ENCODE measurements at regions of chr5 and their contacts with region 1.

Region 1: DNA sequence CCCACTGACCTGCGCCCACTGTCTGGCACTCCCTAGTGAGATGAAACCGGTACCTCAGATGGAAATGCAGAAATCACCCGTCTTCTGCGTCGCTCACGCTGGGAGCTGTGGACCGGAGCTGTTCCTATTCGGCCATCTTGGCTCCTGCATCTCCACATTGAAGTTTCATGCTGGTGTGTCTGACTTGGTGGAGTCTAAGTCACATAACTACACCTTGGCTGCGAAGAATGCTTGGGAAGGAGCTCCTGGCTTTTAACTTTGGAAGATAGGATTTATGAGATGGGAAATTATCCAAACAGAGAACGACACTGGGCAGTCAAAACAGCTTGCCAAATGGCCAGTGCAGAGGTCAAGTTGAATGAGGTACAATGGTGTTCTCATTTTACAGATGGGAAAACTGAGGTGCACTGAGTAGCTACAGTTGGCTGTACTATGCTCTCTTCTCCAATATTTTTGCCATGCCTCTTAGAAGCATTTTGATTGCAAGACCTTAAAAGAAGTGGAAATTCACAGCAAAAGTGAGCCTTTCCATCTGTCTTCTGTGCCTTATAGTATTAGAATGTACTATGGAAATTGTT is 36.7 kb downstream of the CCDC192 start:
- DNase-seq: no peak
- H3K4me3 ChIP-seq: no peak overlapping the region
- H3K27ac ChIP-seq: no peak overlapping the region
- H3K4me1 ChIP-seq: no peaks in the 10 kb centered on the region
- H3K27me3 ChIP-seq: no peaks in the 10 kb centered on the region
- CTCF ChIP-seq: no peak
- POLR2A ChIP-seq: no peak

Region 2: GRCh38 chr5:128192368-128192767 is 452.5 kb after region 1 on chr5:
- intact Hi-C with region 1: loop called in 1 of 2 experiments (anchors 5 kb)
- DNase-seq: no peak
- H3K4me3 ChIP-seq: no peak overlapping the region
- H3K27ac ChIP-seq: no peak overlapping the region
- H3K4me1 ChIP-seq: no peaks in the 10 kb centered on the region
- H3K27me3 ChIP-seq: no peaks in the 10 kb centered on the region
- CTCF ChIP-seq: no peak
- POLR2A ChIP-seq: no peak